Caco-2 (cell line): ENCODE measurements at regions of chr4 and their contacts with region 1.

Region 1: GRCh38 chr4:168183717-168184608 is 91.6 kb downstream of the ANXA10 start:
- DNase-seq: no peak
- H3K4me3 ChIP-seq: no peak overlapping the region
- H3K4me3 Mint-ChIP-seq: no peak overlapping the region
- H3K27ac Mint-ChIP-seq: no peak overlapping the region
- H3K4me1 ChIP-seq: no peaks in the 10 kb centered on the region
- H3K4me1 Mint-ChIP-seq: no peaks in the 10 kb centered on the region
- H3K27me3 ChIP-seq: no peaks in the 10 kb centered on the region
- H3K27me3 Mint-ChIP-seq: peaks cover 4% of the 10 kb centered on the region
- CTCF ChIP-seq: peak; percentile 34 to 44

Region 2: GRCh38 chr4:168199260-168199957 is 15.4 kb after region 1 on chr4:
- CTCF ChIA-PET with region 1: no interaction called
- POLR2A ChIA-PET with region 1: no interaction called
- intact Hi-C with region 1: no loop called
- DNase-seq: no peak
- H3K4me3 ChIP-seq: no peak overlapping the region
- H3K4me3 Mint-ChIP-seq: no peak overlapping the region
- H3K27ac Mint-ChIP-seq: no peak overlapping the region
- H3K4me1 ChIP-seq: no peaks in the 10 kb centered on the region
- H3K4me1 Mint-ChIP-seq: no peaks in the 10 kb centered on the region
- H3K27me3 ChIP-seq: no peaks in the 10 kb centered on the region
- H3K27me3 Mint-ChIP-seq: no peaks in the 10 kb centered on the region
- CTCF ChIP-seq: no peak

Region 3: GRCh38 chr4:168335621-168336020 is 151.7 kb after region 1 on chr4:
- CTCF ChIA-PET with region 1: no interaction called
- POLR2A ChIA-PET with region 1: no interaction called
- intact Hi-C with region 1: no loop called
- DNase-seq: no peak
- H3K4me3 ChIP-seq: no peak overlapping the region
- H3K4me3 Mint-ChIP-seq: no peak overlapping the region
- H3K27ac Mint-ChIP-seq: no peak overlapping the region
- H3K4me1 ChIP-seq: no peaks in the 10 kb centered on the region
- H3K4me1 Mint-ChIP-seq: no peaks in the 10 kb centered on the region
- H3K27me3 ChIP-seq: no peaks in the 10 kb centered on the region
- H3K27me3 Mint-ChIP-seq: no peaks in the 10 kb centered on the region
- CTCF ChIP-seq: no peak

Region 4: DNA sequence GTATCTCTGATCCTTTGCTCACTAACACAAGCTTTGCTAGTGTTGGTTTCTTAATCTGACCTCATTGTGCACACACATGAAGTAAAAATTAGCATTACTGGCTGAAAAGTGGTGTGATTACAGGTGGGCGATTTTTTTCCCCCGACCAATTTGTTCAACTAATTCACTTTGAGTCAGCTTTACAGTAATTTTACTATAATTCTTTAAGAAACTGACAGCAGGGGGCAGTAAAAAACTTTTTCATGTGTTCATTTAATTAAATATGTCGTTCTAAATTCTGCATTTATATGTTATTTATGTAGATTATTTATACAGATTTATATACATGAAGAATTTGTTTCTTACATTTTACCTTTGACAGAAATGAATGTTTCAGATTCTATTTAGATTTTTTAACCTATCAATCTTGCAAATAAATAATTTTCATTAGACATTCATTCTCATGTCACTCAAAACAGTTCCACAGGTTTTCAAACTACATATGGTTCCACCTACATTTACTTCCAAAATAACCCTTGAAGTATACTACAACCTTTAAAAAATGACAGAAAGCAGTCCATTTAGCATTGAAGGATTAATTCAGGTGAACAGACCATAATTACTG is 330.4 kb after region 1 on chr4:
- CTCF ChIA-PET with region 1: no interaction called
- POLR2A ChIA-PET with region 1: no interaction called
- intact Hi-C with region 1: loop called (anchors 10 kb)
- DNase-seq: peak in 1 of 2 experiments; percentile 24
- H3K4me3 ChIP-seq: no peak overlapping the region
- H3K4me3 Mint-ChIP-seq: no peak overlapping the region
- H3K27ac Mint-ChIP-seq: no peak overlapping the region
- H3K4me1 ChIP-seq: no peaks in the 10 kb centered on the region
- H3K4me1 Mint-ChIP-seq: no peaks in the 10 kb centered on the region
- H3K27me3 ChIP-seq: no peaks in the 10 kb centered on the region
- H3K27me3 Mint-ChIP-seq: peaks cover 9% of the 10 kb centered on the region
- CTCF ChIP-seq: peak; percentile 22 to 57

Region 5: GRCh38 chr4:168585168-168586091 is 401.5 kb after region 1 on chr4:
- CTCF ChIA-PET with region 1: no interaction called
- POLR2A ChIA-PET with region 1: no interaction called
- intact Hi-C with region 1: loop called (anchors 1 kb)
- DNase-seq: peak; percentile 63 to 67
- H3K4me3 ChIP-seq: no peak overlapping the region
- H3K4me3 Mint-ChIP-seq: no peak overlapping the region
- H3K27ac Mint-ChIP-seq: no peak overlapping the region
- H3K4me1 ChIP-seq: no peaks in the 10 kb centered on the region
- H3K4me1 Mint-ChIP-seq: no peaks in the 10 kb centered on the region
- H3K27me3 ChIP-seq: no peaks in the 10 kb centered on the region
- H3K27me3 Mint-ChIP-seq: no peaks in the 10 kb centered on the region
- CTCF ChIP-seq: peak; percentile 52 to 62

Region 6: GRCh38 chr4:168631241-168632162 is 447.5 kb after region 1 on chr4:
- CTCF ChIA-PET with region 1: no interaction called
- POLR2A ChIA-PET with region 1: no interaction called
- intact Hi-C with region 1: loop called (anchors 5 kb)
- DNase-seq: peak; percentile 56 to 69
- H3K4me3 ChIP-seq: peak overlapping the region; percentile 41
- H3K4me3 Mint-ChIP-seq: peak overlapping the region; percentile 75
- H3K27ac Mint-ChIP-seq: peak overlapping the region; percentile 34
- H3K4me1 ChIP-seq: no peaks in the 10 kb centered on the region
- H3K4me1 Mint-ChIP-seq: peaks cover 6% of the 10 kb centered on the region
- H3K27me3 ChIP-seq: peaks cover 2% of the 10 kb centered on the region; the same call in 1 of the 2 replicates
- H3K27me3 Mint-ChIP-seq: peaks cover 14% of the 10 kb centered on the region
- CTCF ChIP-seq: peak; percentile 14 to 34

Region 7: GRCh38 chr4:168710353-168710946 is 526.5 kb after region 1 on chr4:
- CTCF ChIA-PET with region 1: no interaction called
- POLR2A ChIA-PET with region 1: no interaction called
- intact Hi-C with region 1: loop called (anchors 10 kb)
- DNase-seq: peak; percentile 30 to 36
- H3K4me3 ChIP-seq: no peak overlapping the region
- H3K4me3 Mint-ChIP-seq: no peak overlapping the region
- H3K27ac Mint-ChIP-seq: no peak overlapping the region
- H3K4me1 ChIP-seq: no peaks in the 10 kb centered on the region
- H3K4me1 Mint-ChIP-seq: no peaks in the 10 kb centered on the region
- H3K27me3 ChIP-seq: no peaks in the 10 kb centered on the region; the same call in 1 of the 2 replicates
- H3K27me3 Mint-ChIP-seq: peaks cover 3% of the 10 kb centered on the region
- CTCF ChIP-seq: peak; percentile 36 to 58

Region 8: DNA sequence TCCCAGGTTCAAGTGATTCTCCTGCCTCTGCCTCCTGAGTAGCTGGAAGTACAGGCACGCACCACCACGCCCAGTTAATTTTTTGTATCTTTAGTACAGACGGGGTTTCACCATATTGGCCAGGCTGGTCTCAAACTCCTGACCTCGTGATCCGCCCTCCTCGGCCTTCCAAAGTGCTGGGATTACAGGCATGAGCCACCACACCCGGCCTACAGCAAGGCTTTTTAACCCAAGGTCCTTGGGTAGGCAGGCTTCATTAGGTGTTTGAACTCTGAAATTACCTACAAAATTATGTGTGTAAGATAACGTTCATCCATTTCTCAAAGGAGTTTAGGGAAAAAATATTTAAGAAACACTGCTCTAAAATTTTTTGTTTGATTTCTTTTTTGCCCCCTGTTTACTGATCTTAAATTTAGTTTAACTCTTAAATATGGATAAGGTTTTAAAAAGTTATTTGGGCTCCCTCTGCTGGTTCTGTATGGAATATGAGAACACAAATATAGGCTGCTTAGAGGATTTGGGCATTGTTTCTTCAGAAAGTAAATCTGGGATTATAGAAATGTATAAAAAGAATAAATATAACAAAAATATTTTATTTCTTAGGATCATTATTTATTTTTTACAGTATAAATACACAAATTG is 733.3 kb after region 1 on chr4:
- CTCF ChIA-PET with region 1: no interaction called
- POLR2A ChIA-PET with region 1: no interaction called
- intact Hi-C with region 1: loop called (anchors 1 kb)
- DNase-seq: peak in 1 of 2 experiments; percentile 30
- H3K4me3 ChIP-seq: no peak overlapping the region
- H3K4me3 Mint-ChIP-seq: no peak overlapping the region
- H3K27ac Mint-ChIP-seq: no peak overlapping the region
- H3K4me1 ChIP-seq: no peaks in the 10 kb centered on the region
- H3K4me1 Mint-ChIP-seq: no peaks in the 10 kb centered on the region
- H3K27me3 ChIP-seq: no peaks in the 10 kb centered on the region
- H3K27me3 Mint-ChIP-seq: no peaks in the 10 kb centered on the region
- CTCF ChIP-seq: peak; percentile 37 to 55

Region 9: DNA sequence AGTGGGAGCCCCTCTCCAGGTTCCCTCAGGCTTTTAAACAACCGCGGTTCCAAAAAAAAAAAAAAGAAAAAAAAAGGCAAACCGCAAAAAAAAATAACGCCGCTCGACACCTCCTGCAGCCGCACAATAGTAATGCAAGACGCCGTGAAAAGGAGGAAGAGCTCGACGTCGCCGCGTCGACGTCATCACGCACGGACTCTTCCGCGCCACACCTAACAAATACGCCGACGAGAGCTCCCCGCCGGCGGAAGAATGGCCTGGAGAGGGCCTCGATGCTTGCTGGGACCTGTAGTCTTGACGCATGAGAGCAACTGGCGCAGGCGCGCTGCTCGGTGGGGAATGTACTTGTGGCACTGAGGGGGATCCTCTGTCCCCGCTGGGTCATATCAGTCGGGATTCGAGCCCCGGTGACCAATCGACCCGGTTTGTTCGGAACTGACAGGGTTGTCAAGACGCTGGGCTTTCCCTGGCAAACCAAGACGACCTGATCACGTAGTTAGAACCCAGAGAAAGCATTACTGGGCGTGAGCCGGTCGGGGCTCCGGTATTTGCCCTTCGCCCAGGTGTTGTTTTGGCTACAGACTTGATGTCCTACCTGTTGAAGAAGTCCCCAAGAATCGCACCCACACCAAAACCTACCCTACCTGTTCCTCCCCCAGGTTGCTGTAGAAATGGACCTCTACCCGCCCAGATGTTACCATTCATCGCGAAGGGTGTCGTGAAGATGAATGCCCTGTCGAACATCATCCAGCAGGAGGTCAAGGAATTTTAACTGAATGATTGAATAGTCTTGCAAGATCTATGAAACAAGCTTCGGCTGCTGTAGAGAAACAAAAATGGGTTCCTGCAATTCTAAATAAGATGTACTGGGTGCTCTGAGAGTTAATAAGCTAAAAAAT is 826.4 kb after region 1 on chr4 and contains the start of gene CBR4:
- CTCF ChIA-PET with region 1: no interaction called
- POLR2A ChIA-PET with region 1: no interaction called
- intact Hi-C with region 1: loop called (anchors 5 kb)
- DNase-seq: peak; percentile 94 to 97
- H3K4me3 ChIP-seq: peak within 1 kb of the TSS; percentile 65
- H3K4me3 Mint-ChIP-seq: peak within 1 kb of the TSS; percentile 91
- H3K27ac Mint-ChIP-seq: peak within 1 kb of the TSS; percentile 97
- H3K4me1 ChIP-seq: peaks cover 28% of the 10 kb centered on the region
- H3K4me1 Mint-ChIP-seq: peaks cover 16% of the 10 kb centered on the region
- H3K27me3 ChIP-seq: no peaks in the 10 kb centered on the region
- H3K27me3 Mint-ChIP-seq: no peaks in the 10 kb centered on the region
- CTCF ChIP-seq: peak; percentile 23 to 41
- total RNA-seq, gene CBR4: 21.4 and 22.5 TPM in 2 replicates